ENCODE measurements at regions of chr2 and their contacts with region 1.

Region 1: GRCh38 chr2:69375494-69376353 is 11.3 kb downstream of the GFPT1 start:
- DNase-seq: peak; percentile 39 to 68 (median 52)
- ATAC-seq: peak; percentile 85
- H3K4me3 ChIP-seq: no peak overlapping the region
- H3K27ac ChIP-seq: 0 out of 3 replicates have a peak overlapping the region, but pooled peaks have one; percentile 14
- H3K4me1 ChIP-seq: peaks cover 0 to 5% of the 10 kb centered on the region in 2 experiments; a peak in 2 of 5 replicates
- H3K27me3 ChIP-seq: no peaks in the 10 kb centered on the region
- CTCF ChIP-seq: peak; percentile 73 to 83 (median 75)
- EP300 ChIP-seq: no peak
- POLR2A ChIP-seq: no peak
- RAD21 ChIP-seq: peak; percentile 52 to 73

Region 2: GRCh38 chr2:69386789-69387734 is 11.3 kb after region 1 on chr2 and contains the start of gene GFPT1:
- CTCF ChIA-PET with region 1: no interaction called
- POLR2A ChIA-PET with region 1: interaction called, 17 read pairs
- in situ Hi-C with region 1: no loop called
- intact Hi-C with region 1: loop called (anchors 1 kb)
- DNase-seq: peak; percentile 94 to 96 (median 94)
- ATAC-seq: peak; percentile 91
- H3K4me3 ChIP-seq: peak within 1 kb of the TSS; percentile 94
- H3K27ac ChIP-seq: peak within 1 kb of the TSS; percentile 90
- H3K4me1 ChIP-seq: peaks cover 7 to 20% of the 10 kb centered on the region in 2 experiments
- H3K27me3 ChIP-seq: no peaks in the 10 kb centered on the region
- CTCF ChIP-seq: no peak
- EP300 ChIP-seq: no peak
- POLR2A ChIP-seq: peak; percentile 94
- RAD21 ChIP-seq: no peak
- polyA plus RNA-seq, gene GFPT1: 6.6 to 8.6 TPM

Region 3: DNA sequence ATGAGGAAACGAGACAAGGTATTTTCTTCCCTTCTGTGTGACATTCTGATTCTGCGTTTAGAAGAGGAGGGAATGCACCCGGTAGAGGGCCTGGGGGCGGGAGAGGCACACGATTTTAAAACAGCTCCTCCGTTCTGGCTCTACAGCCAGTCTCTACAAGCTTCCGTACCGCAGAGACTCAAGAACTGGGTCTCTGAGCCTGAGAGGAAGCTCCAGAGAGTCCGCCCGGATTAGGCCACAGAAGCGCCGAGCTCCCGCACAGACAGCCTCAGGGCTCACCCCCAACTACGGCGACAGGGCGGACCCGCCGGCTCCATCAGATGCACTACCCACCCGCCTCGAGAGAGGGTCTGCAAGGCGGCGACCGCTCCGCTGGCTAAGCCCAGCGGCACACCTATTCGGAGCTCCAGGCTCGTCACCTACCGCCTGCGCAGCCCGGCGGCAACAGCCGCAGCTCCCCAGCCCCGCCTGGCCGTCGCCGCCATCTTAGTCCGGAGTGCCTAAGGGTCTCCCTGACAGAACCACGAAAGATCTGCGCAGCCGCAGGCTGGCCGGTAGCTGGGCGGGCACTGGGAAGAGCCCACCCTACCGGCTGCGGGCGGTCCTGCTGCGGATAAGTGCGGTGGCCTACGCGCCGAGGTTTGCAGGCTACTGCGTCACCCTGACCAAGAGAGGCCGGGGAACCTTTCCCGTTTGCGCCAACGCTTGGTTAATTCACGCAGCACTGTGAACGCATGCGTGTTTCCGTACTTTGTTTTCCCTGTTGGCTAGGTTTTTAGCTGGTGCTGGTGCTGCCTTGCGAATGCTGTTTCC is 61.4 kb after region 1 on chr2 and contains the start of gene NFU1:
- CTCF ChIA-PET with region 1: no interaction called
- POLR2A ChIA-PET with region 1: interaction called, 13 read pairs
- in situ Hi-C with region 1: no loop called
- intact Hi-C with region 1: loop called (anchors 2 kb)
- DNase-seq: peak; percentile 97 to 98 (median 97)
- ATAC-seq: peak; percentile 99
- H3K4me3 ChIP-seq: peak within 1 kb of the TSS; percentile 75
- H3K27ac ChIP-seq: peak within 1 kb of the TSS; percentile 96
- H3K4me1 ChIP-seq: peaks cover 15 to 16% of the 10 kb centered on the region in 2 experiments; a peak in 4 of 5 replicates
- H3K27me3 ChIP-seq: no peaks in the 10 kb centered on the region
- CTCF ChIP-seq: peak; percentile 72 to 78 (median 75)
- EP300 ChIP-seq: no peak
- POLR2A ChIP-seq: peak; percentile 95
- RAD21 ChIP-seq: peak; percentile 6 to 46; a peak in 3 of 4 replicates
- polyA plus RNA-seq, gene NFU1: 33.9 to 59.4 TPM

Region 4: DNA sequence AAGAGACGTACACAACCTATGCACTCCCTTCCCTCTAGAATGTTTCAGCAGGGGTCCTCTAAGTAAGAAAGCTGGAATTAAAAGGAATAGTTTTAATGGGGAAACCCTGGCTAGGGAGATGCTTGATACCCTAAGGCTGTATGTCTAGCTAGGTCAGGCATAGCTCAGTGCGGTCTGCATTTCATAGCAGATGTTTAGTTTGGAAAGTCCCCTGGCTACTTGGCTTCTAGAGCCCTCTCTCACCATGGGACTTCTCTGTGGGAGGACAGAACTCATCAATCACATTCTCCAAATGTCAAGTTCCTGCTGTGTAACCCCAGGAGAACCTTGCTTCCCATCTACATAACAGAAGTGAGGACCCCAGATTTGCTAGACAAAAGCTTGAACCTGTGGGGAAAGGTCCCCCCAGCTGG is 342.1 kb after region 1 on chr2:
- CTCF ChIA-PET with region 1: interaction called, 3 read pairs
- POLR2A ChIA-PET with region 1: no interaction called
- in situ Hi-C with region 1: no loop called
- intact Hi-C with region 1: loop called (anchors 5 kb)
- DNase-seq: no peak
- ATAC-seq: no peak
- H3K4me3 ChIP-seq: no peak overlapping the region
- H3K27ac ChIP-seq: no peak overlapping the region
- H3K4me1 ChIP-seq: peaks cover 0 to 8% of the 10 kb centered on the region in 2 experiments; a peak in 2 of 5 replicates
- H3K27me3 ChIP-seq: no peaks in the 10 kb centered on the region
- CTCF ChIP-seq: no peak
- EP300 ChIP-seq: no peak
- POLR2A ChIP-seq: no peak
- RAD21 ChIP-seq: no peak